Activated CD8-positive, alpha-beta T cell treated with anti-CD3 and anti-CD28 coated beads for 36 hours (primary cell): ENCODE measurements at regions of chr19 and their contacts with region 1.

Region 1: GRCh38 chr19:2236314-2237050 is at the starts of genes PLEKHJ1 and SF3A2:
- DNase-seq: peak; percentile 98
- ATAC-seq: peak; percentile 88
- H3K4me3 Mint-ChIP-seq: peak within 1 kb of the TSS; percentile 92
- H3K27ac Mint-ChIP-seq: peak within 1 kb of the TSS; percentile 99
- H3K4me1 Mint-ChIP-seq: peaks cover 54% of the 10 kb centered on the region
- H3K27me3 Mint-ChIP-seq: no peaks in the 10 kb centered on the region
- CTCF ChIP-seq: peak; percentile 98
- total RNA-seq, gene PLEKHJ1: 65.3 to 72.8 TPM
- total RNA-seq, gene SF3A2: 157 to 163 TPM

Region 2: GRCh38 chr19:2171349-2172145 is 64.9 kb before region 1 on chr19:
- CTCF ChIA-PET with region 1: interaction called, 5 read pairs
- POLR2A ChIA-PET with region 1: interaction called, 6 read pairs
- intact Hi-C with region 1: loop called (anchors 10 kb)
- DNase-seq: peak; percentile 98
- ATAC-seq: peak; percentile 81
- H3K4me3 Mint-ChIP-seq: peak overlapping the region; percentile 62
- H3K27ac Mint-ChIP-seq: peak overlapping the region; percentile 81
- H3K4me1 Mint-ChIP-seq: peaks cover 75% of the 10 kb centered on the region
- H3K27me3 Mint-ChIP-seq: no peaks in the 10 kb centered on the region
- CTCF ChIP-seq: peak; percentile 37

Region 3: GRCh38 chr19:2246801-2247361 is 10.4 kb after region 1 on chr19:
- CTCF ChIA-PET with region 1: interaction called, 6 read pairs
- POLR2A ChIA-PET with region 1: interaction called, 202 read pairs
- intact Hi-C with region 1: no loop called
- DNase-seq: no peak
- ATAC-seq: no peak
- H3K4me3 Mint-ChIP-seq: no peak overlapping the region
- H3K27ac Mint-ChIP-seq: no peak overlapping the region
- H3K4me1 Mint-ChIP-seq: peaks cover 9% of the 10 kb centered on the region
- H3K27me3 Mint-ChIP-seq: no peaks in the 10 kb centered on the region
- CTCF ChIP-seq: no peak

Region 4: GRCh38 chr19:2261438-2262172 is 25.1 kb after region 1 on chr19:
- CTCF ChIA-PET with region 1: interaction called, 38 read pairs
- POLR2A ChIA-PET with region 1: interaction called, 202 read pairs
- intact Hi-C with region 1: no loop called
- DNase-seq: peak; percentile 84
- ATAC-seq: peak; percentile 52
- H3K4me3 Mint-ChIP-seq: no peak overlapping the region
- H3K27ac Mint-ChIP-seq: no peak overlapping the region
- H3K4me1 Mint-ChIP-seq: peaks cover 28% of the 10 kb centered on the region
- H3K27me3 Mint-ChIP-seq: no peaks in the 10 kb centered on the region
- CTCF ChIP-seq: peak; percentile 92

Region 5: DNA sequence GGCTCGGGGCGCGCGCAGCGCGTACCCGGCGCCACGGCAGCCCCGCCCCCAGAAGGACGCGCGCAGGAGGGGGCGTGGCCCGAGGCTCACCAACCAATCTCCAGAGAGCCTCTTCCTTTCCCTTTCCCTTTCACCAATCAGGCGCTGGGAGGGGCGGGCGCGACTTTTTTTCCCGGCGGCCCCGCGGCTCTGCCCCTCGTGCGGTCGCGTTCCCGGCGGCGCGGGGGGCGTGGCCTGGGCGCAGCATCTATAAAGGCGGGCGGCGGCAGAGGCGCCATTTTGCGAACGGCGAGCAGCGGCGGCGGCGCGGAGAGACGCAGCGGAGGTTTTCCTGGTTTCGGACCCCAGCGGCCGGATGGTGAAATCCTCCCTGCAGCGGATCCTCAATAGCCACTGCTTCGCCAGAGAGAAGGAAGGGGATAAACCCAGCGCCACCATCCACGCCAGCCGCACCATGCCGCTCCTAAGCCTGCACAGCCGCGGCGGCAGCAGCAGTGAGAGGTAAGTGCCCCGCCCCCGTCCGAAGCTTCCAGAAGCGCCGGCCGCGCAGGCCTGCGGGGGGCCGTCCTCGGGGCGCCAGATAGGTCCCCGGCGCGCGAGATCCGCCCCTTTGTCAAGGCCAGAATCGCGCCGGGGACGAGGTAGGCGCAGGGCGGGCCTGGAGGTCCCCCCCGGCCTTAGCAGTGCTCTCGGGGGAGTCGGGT is 32.9 kb after region 1 on chr19:
- CTCF ChIA-PET with region 1: interaction called, 23 read pairs
- POLR2A ChIA-PET with region 1: interaction called, 89 read pairs
- intact Hi-C with region 1: loop called (anchors 2 kb)
- DNase-seq: peak; percentile 98
- ATAC-seq: peak; percentile 80
- H3K4me3 Mint-ChIP-seq: peak overlapping the region; percentile 85
- H3K27ac Mint-ChIP-seq: peak overlapping the region; percentile 90
- H3K4me1 Mint-ChIP-seq: peaks cover 35% of the 10 kb centered on the region
- H3K27me3 Mint-ChIP-seq: no peaks in the 10 kb centered on the region
- CTCF ChIP-seq: no peak